Panc1 (cell line): ENCODE measurements at regions of chr2 and their contacts with region 1.

Region 1: GRCh38 chr2:96174251-96175144 is 29.3 kb upstream of the DUSP2 start:
- DNase-seq: peak; percentile 45
- ATAC-seq: peak; percentile 95
- H3K4me3 ChIP-seq: no peak overlapping the region
- H3K27ac ChIP-seq: no peak overlapping the region
- H3K4me1 ChIP-seq: no peaks in the 10 kb centered on the region
- H3K27me3 ChIP-seq: no peaks in the 10 kb centered on the region
- CTCF ChIP-seq: peak; percentile 96

Region 2: DNA sequence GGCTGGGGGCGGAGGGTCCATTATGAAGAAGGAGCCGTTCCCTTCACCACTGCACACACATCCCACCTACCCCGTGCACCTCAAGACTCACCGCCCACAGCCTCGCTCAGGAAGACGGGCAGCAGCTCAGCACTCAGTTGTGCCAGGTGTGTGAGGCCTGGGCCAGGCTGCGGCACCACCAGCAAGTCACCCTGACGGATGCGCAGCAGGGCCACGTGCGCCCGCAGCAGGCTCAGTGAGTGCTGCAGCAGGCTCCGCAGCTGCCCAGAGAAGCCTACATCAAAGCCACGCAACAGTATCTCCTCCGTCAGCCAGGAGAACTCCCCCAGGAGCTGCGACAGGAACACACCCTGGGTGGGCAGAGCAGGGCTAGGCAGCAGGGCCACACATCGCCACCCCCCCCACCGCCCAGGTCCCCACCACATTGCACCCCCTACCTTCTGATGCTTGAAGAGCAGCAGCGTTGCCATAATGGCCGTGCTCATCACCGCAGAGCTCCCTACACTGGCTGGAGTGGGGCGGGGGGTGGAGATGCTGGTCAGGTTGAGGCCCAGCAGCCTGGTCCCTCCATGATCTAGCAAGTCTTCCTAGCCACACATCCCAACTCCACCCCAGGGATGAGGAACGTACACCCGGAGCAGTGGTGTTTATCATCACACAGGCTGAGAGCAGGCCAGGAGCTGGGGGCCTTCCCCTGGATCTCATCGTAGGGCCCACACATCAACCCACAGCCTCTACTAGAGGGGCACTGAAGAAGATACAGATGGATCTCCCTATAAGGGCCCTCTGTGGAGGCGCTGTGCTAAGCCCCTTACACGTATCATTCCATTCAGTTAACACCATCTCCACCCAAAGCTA is 149.9 kb before region 1 on chr2:
- CTCF ChIA-PET with region 1: interaction called, 12 read pairs
- POLR2A ChIA-PET with region 1: no interaction called
- in situ Hi-C with region 1: no loop called
- intact Hi-C with region 1: no loop called
- DNase-seq: no peak
- ATAC-seq: no peak
- H3K4me3 ChIP-seq: no peak overlapping the region
- H3K27ac ChIP-seq: no peak overlapping the region
- H3K4me1 ChIP-seq: no peaks in the 10 kb centered on the region
- H3K27me3 ChIP-seq: no peaks in the 10 kb centered on the region
- CTCF ChIP-seq: no peak

Region 3: GRCh38 chr2:96138179-96139145 is 36.0 kb before region 1 on chr2 and contains the start of gene ASTL:
- CTCF ChIA-PET with region 1: interaction called, 55 read pairs
- POLR2A ChIA-PET with region 1: no interaction called
- in situ Hi-C with region 1: no loop called
- intact Hi-C with region 1: loop called (anchors 1 kb)
- DNase-seq: no peak
- ATAC-seq: peak; percentile 80
- H3K4me3 ChIP-seq: no peak within 1 kb of the TSS
- H3K27ac ChIP-seq: no peak within 1 kb of the TSS
- H3K4me1 ChIP-seq: no peaks in the 10 kb centered on the region
- H3K27me3 ChIP-seq: no peaks in the 10 kb centered on the region
- CTCF ChIP-seq: peak; percentile 52
- total RNA-seq, gene ASTL: 0.18 TPM

Region 4: GRCh38 chr2:96157651-96158553 is 16.6 kb before region 1 on chr2:
- CTCF ChIA-PET with region 1: interaction called, 5 read pairs
- POLR2A ChIA-PET with region 1: no interaction called
- in situ Hi-C with region 1: no loop called
- intact Hi-C with region 1: loop called (anchors 1 kb)
- DNase-seq: no peak
- ATAC-seq: no peak
- H3K4me3 ChIP-seq: no peak overlapping the region
- H3K27ac ChIP-seq: no peak overlapping the region
- H3K4me1 ChIP-seq: no peaks in the 10 kb centered on the region
- H3K27me3 ChIP-seq: no peaks in the 10 kb centered on the region
- CTCF ChIP-seq: no peak

Region 5: GRCh38 chr2:96265840-96266679 is 91.6 kb after region 1 on chr2 and contains the starts of genes CIAO1 and TMEM127:
- CTCF ChIA-PET with region 1: no interaction called
- POLR2A ChIA-PET with region 1: no interaction called
- in situ Hi-C with region 1: loop called (anchors 25 kb)
- intact Hi-C with region 1: no loop called
- DNase-seq: peak; percentile 74
- ATAC-seq: peak; percentile 98
- H3K4me3 ChIP-seq: peak within 1 kb of the TSS; percentile 61 to 94
- H3K27ac ChIP-seq: peak within 1 kb of the TSS; percentile 77
- H3K4me1 ChIP-seq: peaks cover 27% of the 10 kb centered on the region
- H3K27me3 ChIP-seq: no peaks in the 10 kb centered on the region
- CTCF ChIP-seq: no peak
- total RNA-seq, gene CIAO1: 85.5 TPM
- total RNA-seq, gene TMEM127: 63.1 TPM